ENCODE measurements at regions of chr12 and their contacts with region 1.

Region 1: DNA sequence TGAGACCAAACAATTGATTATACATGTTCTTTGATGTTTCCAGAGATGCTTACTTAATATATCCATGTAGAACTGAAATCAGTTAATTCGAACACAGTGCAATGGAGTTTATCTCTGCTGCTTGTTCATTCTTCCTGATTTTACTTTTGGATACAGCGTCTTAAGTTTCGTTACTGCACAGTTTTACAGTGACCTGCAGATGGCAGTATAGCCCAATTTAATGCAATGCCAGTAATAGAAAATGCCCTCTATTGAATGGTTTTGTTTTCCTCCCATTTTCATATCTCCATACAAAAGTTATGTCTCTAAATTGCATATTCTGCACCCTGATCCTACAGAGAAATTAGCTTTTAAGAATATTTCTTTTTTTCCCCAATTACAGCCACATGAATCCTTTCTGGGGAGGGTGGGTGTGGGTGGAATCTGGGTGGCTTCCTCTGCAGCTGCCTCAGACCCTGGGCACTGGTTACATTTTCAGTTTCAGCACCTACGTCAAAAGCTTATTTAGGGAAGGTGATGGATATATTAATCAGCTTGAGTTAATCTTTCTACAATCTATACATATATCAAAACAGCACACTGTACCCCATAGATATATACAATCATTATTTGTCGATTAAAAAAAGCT is 101.1 kb upstream of the DCD start:
- DNase-seq: no peak
- H3K4me3 ChIP-seq: no peak overlapping the region
- CTCF ChIP-seq: peak; percentile 60

Region 2: DNA sequence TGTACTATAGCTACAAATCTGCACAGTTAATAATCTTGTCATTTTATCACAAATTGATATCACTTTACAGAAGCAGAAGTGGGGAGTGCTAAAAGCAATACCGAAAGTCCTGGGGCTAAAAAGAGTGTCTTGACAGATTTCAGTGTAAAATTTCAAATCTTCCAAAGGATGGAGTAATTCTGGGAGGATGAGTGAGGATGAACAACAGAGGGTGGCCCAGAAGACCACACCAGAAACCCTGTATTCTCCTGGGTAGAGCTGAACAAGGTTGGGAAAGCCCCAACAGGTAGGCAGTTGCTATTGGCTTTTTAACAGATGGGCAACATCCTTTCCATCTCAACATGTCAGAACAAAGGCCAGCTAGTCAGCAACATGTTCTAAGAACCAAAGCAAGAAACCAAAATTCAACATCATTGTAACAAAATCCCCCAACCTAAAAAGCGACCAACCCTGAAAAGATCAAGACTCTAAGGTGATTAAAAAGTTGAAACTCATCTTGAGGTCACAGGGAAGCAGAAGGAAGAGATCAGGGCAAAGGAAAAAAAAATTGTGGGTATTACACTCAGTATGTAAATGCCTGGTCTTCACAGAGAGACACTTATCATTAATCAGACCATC is 508.2 kb before region 1 on chr12:
- CTCF ChIA-PET with region 1: no interaction called
- POLR2A ChIA-PET with region 1: no interaction called
- DNase-seq: no peak
- H3K4me3 ChIP-seq: no peak overlapping the region
- CTCF ChIP-seq: no peak

Region 3: GRCh38 chr12:54723379-54724256 is 25.7 kb before region 1 on chr12:
- CTCF ChIA-PET with region 1: interaction called, 11 read pairs
- POLR2A ChIA-PET with region 1: no interaction called
- DNase-seq: no peak
- H3K4me3 ChIP-seq: no peak overlapping the region
- CTCF ChIP-seq: peak; percentile 54

Region 4: GRCh38 chr12:54759751-54760150 is 10.4 kb after region 1 on chr12:
- CTCF ChIA-PET with region 1: interaction called, 38 read pairs
- POLR2A ChIA-PET with region 1: no interaction called
- DNase-seq: peak; percentile 0
- H3K4me3 ChIP-seq: no peak overlapping the region
- CTCF ChIP-seq: no peak

Region 5: DNA sequence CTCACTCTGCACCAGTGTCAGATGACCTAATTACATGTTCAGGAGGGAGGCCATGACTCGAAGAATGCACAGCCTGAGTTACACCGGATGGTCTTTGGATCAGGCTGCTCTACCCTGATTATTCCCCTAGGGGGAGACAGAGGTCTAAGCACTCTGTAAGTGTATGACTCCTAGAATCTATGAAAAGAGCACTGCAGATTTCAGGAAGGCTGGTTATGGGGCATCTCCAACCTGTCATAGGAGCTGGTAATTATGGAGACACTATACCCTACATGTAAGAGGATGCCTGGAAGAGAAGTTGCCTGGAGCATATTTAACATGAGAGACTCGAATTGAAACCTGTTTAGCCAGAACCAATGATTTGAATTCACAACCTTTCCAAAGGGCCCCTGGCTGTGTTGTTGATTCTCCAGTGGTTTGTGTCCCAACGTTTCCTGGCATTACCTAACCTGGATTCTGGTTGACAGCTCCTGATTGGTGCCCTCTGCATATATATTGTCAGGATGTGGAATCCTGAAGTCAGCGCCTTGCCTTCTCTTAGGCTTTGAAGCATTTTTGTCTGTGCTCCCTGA is 104.8 kb after region 1 on chr12 and contains the start of gene MUCL1:
- CTCF ChIA-PET with region 1: interaction called, 11 read pairs
- POLR2A ChIA-PET with region 1: no interaction called
- DNase-seq: no peak
- H3K4me3 ChIP-seq: no peak within 1 kb of the TSS
- CTCF ChIP-seq: peak; percentile 78